ENCODE measurements at regions of chr22 and their contacts with region 1.

Region 1: DNA sequence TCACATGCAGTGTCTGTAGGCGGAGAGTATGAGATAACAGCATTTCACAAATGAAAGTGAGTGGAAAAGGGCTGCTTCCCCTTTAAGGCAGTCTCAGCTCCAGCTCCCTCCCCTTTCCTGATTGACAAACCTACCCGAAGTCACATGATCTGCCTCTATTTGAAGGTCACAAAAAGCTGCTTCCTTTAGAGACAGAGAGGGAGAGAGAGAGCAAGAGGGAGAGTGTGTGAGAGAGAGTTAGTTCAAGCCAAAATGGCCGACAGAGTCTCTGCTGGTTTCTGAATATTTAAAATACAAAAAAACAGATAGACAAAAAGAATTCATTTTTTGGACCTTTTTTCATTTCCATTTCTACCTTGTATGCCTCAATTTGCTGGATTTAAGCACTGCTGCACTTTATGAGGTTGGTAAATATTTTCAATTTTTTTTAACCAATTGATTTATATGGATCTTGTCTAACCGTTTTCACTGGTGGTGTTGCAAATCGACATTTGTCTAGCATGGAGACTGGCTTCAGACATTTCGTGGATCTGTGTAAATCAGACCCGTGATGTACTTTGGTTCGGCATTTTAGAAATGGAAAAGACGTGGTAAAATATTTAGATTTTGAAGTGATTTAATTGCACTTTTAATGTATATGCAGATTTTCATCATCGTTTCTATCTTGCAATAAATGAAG is at the start of gene TNRC6B:
- DNase-seq: peak; percentile 98
- ATAC-seq: peak; percentile 92
- H3K4me3 ChIP-seq: peak within 1 kb of the TSS; percentile 60
- H3K27ac ChIP-seq: peak within 1 kb of the TSS; percentile 81
- H3K4me1 ChIP-seq: peaks cover 9% of the 10 kb centered on the region
- H3K27me3 ChIP-seq: no peaks in the 10 kb centered on the region
- CTCF ChIP-seq: no peak
- EP300 ChIP-seq: peak; percentile 17 to 80; a peak in 2 of 4 replicates
- POLR2A ChIP-seq: peak; percentile 91
- RAD21 ChIP-seq: peak; percentile 24; the same call in 1 of the 2 replicates
- polyA plus RNA-seq, gene TNRC6B: 3.6 to 25.3 TPM

Region 2: GRCh38 chr22:39873965-39874364 is 303.9 kb before region 1 on chr22:
- CTCF ChIA-PET with region 1: no interaction called
- POLR2A ChIA-PET with region 1: no interaction called
- RAD21 ChIA-PET with region 1: no interaction called
- SMC1A ChIA-PET with region 1: no interaction called
- in situ Hi-C with region 1: no loop called
- intact Hi-C with region 1: no loop called
- DNase-seq: no peak
- ATAC-seq: no peak
- H3K4me3 ChIP-seq: no peak overlapping the region
- H3K27ac ChIP-seq: no peak overlapping the region
- H3K4me1 ChIP-seq: peaks cover 10% of the 10 kb centered on the region
- H3K27me3 ChIP-seq: no peaks in the 10 kb centered on the region
- CTCF ChIP-seq: no peak
- EP300 ChIP-seq: no peak
- POLR2A ChIP-seq: no peak
- RAD21 ChIP-seq: no peak

Region 3: GRCh38 chr22:40044102-40044869 is 133.6 kb before region 1 on chr22:
- CTCF ChIA-PET with region 1: interaction called, 9 read pairs
- POLR2A ChIA-PET with region 1: interaction called, 16 read pairs
- RAD21 ChIA-PET with region 1: interaction called, 45 read pairs
- SMC1A ChIA-PET with region 1: interaction called, 14 read pairs
- in situ Hi-C with region 1: no loop called
- intact Hi-C with region 1: loop called (anchors 2 kb)
- DNase-seq: peak; percentile 99
- ATAC-seq: peak; percentile 97
- H3K4me3 ChIP-seq: peak overlapping the region; percentile 72
- H3K27ac ChIP-seq: peak overlapping the region; percentile 81
- H3K4me1 ChIP-seq: peaks cover 9% of the 10 kb centered on the region
- H3K27me3 ChIP-seq: 0 out of 4 replicates have a peak, but pooled peaks cover 0 to 1% of the 10 kb centered on the region in 2 experiments
- CTCF ChIP-seq: no peak
- EP300 ChIP-seq: no peak
- POLR2A ChIP-seq: peak; percentile 94
- RAD21 ChIP-seq: no peak

Region 4: GRCh38 chr22:40161194-40161593 is 16.7 kb before region 1 on chr22:
- CTCF ChIA-PET with region 1: no interaction called
- POLR2A ChIA-PET with region 1: interaction called, 3 read pairs
- RAD21 ChIA-PET with region 1: no interaction called
- SMC1A ChIA-PET with region 1: interaction called, 14 read pairs
- in situ Hi-C with region 1: no loop called
- intact Hi-C with region 1: no loop called
- DNase-seq: no peak
- ATAC-seq: no peak
- H3K4me3 ChIP-seq: no peak overlapping the region
- H3K27ac ChIP-seq: no peak overlapping the region
- H3K4me1 ChIP-seq: no peaks in the 10 kb centered on the region
- H3K27me3 ChIP-seq: no peaks in the 10 kb centered on the region
- CTCF ChIP-seq: no peak
- EP300 ChIP-seq: no peak
- POLR2A ChIP-seq: no peak
- RAD21 ChIP-seq: no peak

Region 5: GRCh38 chr22:40193429-40194421 is 15.8 kb after region 1 on chr22:
- CTCF ChIA-PET with region 1: interaction called, 8 read pairs
- POLR2A ChIA-PET with region 1: interaction called, 7 read pairs
- RAD21 ChIA-PET with region 1: interaction called, 7 read pairs
- SMC1A ChIA-PET with region 1: interaction called, 43 read pairs
- in situ Hi-C with region 1: no loop called
- intact Hi-C with region 1: no loop called
- DNase-seq: no peak
- ATAC-seq: no peak; the same call in 2 of the 3 replicates
- H3K4me3 ChIP-seq: no peak overlapping the region
- H3K27ac ChIP-seq: no peak overlapping the region
- H3K4me1 ChIP-seq: peaks cover 15% of the 10 kb centered on the region
- H3K27me3 ChIP-seq: no peaks in the 10 kb centered on the region
- CTCF ChIP-seq: peak in 2 of 3 experiments; percentile 6 to 26; a peak in 2 of 6 replicates
- EP300 ChIP-seq: no peak
- POLR2A ChIP-seq: no peak
- RAD21 ChIP-seq: peak; percentile 30; the same call in 1 of the 2 replicates

Region 6: GRCh38 chr22:40203572-40203971 is 25.7 kb after region 1 on chr22:
- CTCF ChIA-PET with region 1: interaction called, 3 read pairs
- POLR2A ChIA-PET with region 1: interaction called, 4 read pairs
- RAD21 ChIA-PET with region 1: interaction called, 6 read pairs
- SMC1A ChIA-PET with region 1: interaction called, 12 read pairs
- in situ Hi-C with region 1: no loop called
- intact Hi-C with region 1: no loop called
- DNase-seq: no peak
- ATAC-seq: peak; percentile 94
- H3K4me3 ChIP-seq: no peak overlapping the region
- H3K27ac ChIP-seq: peak overlapping the region; percentile 23
- H3K4me1 ChIP-seq: peaks cover 30% of the 10 kb centered on the region
- H3K27me3 ChIP-seq: no peaks in the 10 kb centered on the region
- CTCF ChIP-seq: no peak
- EP300 ChIP-seq: no peak
- POLR2A ChIP-seq: no peak
- RAD21 ChIP-seq: no peak

Region 7: DNA sequence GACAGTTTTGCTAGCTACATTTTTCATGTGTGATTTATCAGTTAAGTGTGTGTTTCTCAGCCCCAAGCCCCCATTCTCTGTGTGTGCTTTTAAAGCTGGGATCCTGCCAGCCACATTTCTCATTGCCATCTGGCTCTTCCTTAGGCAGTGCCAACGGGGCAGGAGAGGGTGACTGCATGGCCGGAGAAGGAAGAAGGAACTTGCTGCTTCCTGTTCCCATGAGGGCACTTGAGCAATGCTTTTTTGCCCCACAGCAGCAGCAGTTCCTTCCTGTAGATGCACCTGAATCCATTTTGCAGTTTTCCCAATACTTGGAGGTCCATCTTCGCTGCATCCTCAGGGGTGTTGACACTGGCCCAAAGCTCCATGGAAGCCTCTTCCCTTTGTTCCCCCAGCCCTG is 37.4 kb after region 1 on chr22:
- CTCF ChIA-PET with region 1: interaction called, 4 read pairs
- POLR2A ChIA-PET with region 1: interaction called, 4 read pairs
- RAD21 ChIA-PET with region 1: interaction called, 10 read pairs
- SMC1A ChIA-PET with region 1: interaction called, 17 read pairs
- in situ Hi-C with region 1: no loop called
- intact Hi-C with region 1: no loop called
- DNase-seq: no peak
- ATAC-seq: no peak
- H3K4me3 ChIP-seq: 0 out of 2 replicates have a peak overlapping the region, but pooled peaks have one; percentile 13
- H3K27ac ChIP-seq: peak overlapping the region; percentile 59
- H3K4me1 ChIP-seq: peaks cover 46% of the 10 kb centered on the region
- H3K27me3 ChIP-seq: no peaks in the 10 kb centered on the region
- CTCF ChIP-seq: no peak
- EP300 ChIP-seq: no peak
- POLR2A ChIP-seq: 0 out of 2 replicates have a peak, but pooled peaks have one; percentile 26
- RAD21 ChIP-seq: no peak